ENCODE measurements at regions of chrX and their contacts with region 1.

Region 1: GRCh38 chrX:14872851-14873675 is at the starts of genes FANCB and MOSPD2:
- DNase-seq: peak; percentile 93
- H3K4me3 Mint-ChIP-seq: peak within 1 kb of the TSS; percentile 83
- H3K27ac Mint-ChIP-seq: peak within 1 kb of the TSS; percentile 80
- H3K4me1 Mint-ChIP-seq: peaks cover 27% of the 10 kb centered on the region
- H3K27me3 Mint-ChIP-seq: no peaks in the 10 kb centered on the region
- total RNA-seq, gene FANCB: 14.2 and 14.6 TPM in 2 replicates
- total RNA-seq, gene MOSPD2: 12.6 and 14.8 TPM in 2 replicates

Region 2: DNA sequence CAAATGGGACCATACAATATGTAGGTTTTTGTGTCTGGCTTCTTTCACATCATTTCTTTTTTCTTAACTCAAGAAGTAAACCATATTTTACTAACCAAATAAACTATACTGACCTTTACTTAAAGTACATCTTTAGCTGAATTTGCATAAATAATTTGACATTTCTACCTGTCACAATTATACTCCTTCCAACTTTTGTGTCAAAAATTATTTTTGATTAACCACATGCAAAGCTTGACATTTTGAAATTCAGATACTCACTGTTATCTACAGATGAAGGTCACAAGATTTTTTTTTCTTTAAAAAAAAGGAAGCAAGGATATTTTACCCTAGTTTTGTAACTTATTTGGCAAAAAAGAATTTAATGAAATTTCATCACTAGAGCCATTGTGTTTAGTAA is 1196.2 kb before region 1 on chrX:
- intact Hi-C with region 1: no loop called
- DNase-seq: no peak
- H3K4me3 Mint-ChIP-seq: no peak overlapping the region
- H3K27ac Mint-ChIP-seq: no peak overlapping the region
- H3K4me1 Mint-ChIP-seq: no peaks in the 10 kb centered on the region
- H3K27me3 Mint-ChIP-seq: no peaks in the 10 kb centered on the region

Region 3: DNA sequence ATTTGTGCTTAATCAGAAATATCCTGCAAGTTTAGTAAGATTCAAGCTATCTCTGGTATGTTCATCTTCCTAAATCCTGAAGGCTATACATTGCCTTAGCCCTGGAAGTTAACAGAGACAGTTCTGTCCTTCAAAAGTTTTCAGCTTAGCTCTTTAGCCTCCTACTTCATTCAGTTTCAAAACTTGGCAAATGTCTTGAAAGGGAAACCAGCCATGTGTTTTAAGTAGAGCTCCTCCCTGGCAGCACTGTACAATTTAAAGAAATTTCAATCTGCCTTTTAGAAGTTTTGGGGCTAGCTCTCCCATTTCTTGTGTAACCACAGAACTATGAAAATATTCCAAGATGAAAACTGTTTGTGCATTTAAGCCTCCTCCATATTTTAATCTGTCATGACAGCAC is 47.2 kb before region 1 on chrX:
- intact Hi-C with region 1: no loop called
- DNase-seq: no peak
- H3K4me3 Mint-ChIP-seq: no peak overlapping the region
- H3K27ac Mint-ChIP-seq: no peak overlapping the region
- H3K4me1 Mint-ChIP-seq: no peaks in the 10 kb centered on the region
- H3K27me3 Mint-ChIP-seq: no peaks in the 10 kb centered on the region

Region 4: GRCh38 chrX:14851526-14851925 is 21.5 kb before region 1 on chrX:
- intact Hi-C with region 1: no loop called
- DNase-seq: no peak
- H3K4me3 Mint-ChIP-seq: no peak overlapping the region
- H3K27ac Mint-ChIP-seq: no peak overlapping the region
- H3K4me1 Mint-ChIP-seq: peaks cover 3% of the 10 kb centered on the region
- H3K27me3 Mint-ChIP-seq: no peaks in the 10 kb centered on the region

Region 5: GRCh38 chrX:14916017-14916674 is 43.1 kb after region 1 on chrX:
- intact Hi-C with region 1: loop called (anchors 2 kb)
- DNase-seq: no peak
- H3K4me3 Mint-ChIP-seq: no peak overlapping the region
- H3K27ac Mint-ChIP-seq: no peak overlapping the region
- H3K4me1 Mint-ChIP-seq: no peaks in the 10 kb centered on the region
- H3K27me3 Mint-ChIP-seq: no peaks in the 10 kb centered on the region

Region 6: GRCh38 chrX:14964500-14964899 is 91.4 kb after region 1 on chrX:
- intact Hi-C with region 1: no loop called
- DNase-seq: no peak
- H3K4me3 Mint-ChIP-seq: no peak overlapping the region
- H3K27ac Mint-ChIP-seq: no peak overlapping the region
- H3K4me1 Mint-ChIP-seq: no peaks in the 10 kb centered on the region
- H3K27me3 Mint-ChIP-seq: no peaks in the 10 kb centered on the region

Region 7: DNA sequence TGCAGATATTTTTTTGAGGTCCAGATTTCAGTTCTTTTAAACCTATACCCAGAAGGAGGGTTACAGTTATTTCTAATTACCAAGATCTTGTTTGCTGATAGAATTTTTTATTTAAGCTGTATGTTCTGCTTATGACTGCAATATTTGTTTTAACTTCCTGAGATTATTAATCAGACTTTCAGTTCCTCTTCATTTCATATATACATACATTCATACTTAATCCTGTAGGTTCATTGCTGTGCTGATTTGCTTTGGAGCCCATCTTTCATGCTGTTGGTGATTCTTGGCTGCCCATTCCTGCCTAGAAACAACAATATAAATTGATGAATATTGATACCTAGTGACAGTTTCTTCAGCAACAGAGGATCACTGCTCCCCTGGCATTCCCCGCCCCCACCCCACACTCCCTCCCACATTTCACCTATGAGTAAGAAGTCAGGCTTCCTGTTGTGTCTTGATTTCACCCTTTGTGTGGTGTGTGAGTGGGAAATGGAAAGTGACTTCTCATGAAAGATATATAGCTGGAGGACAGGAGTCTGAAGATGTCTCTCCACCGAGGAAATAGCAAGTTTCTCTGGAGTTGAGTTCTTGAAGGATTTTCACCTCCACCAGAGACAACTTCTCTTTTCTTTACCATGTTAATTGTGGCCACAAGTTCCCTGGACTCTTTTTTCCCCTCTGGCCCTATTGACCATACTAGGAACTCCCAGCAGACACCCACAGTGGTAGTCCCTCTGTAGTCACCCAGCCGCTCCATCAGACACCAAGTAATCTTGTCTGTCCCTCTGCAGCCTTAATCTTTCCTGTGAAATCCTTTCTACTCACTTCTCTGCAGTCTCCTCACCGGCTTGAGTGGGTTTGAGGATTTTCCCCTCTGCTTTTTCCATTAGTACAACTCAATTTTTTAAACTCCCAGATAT is 278.5 kb after region 1 on chrX:
- intact Hi-C with region 1: loop called (anchors 1 kb)
- DNase-seq: no peak
- H3K4me3 Mint-ChIP-seq: no peak overlapping the region
- H3K27ac Mint-ChIP-seq: peak overlapping the region; percentile 38
- H3K4me1 Mint-ChIP-seq: peaks cover 21% of the 10 kb centered on the region
- H3K27me3 Mint-ChIP-seq: peaks cover 7% of the 10 kb centered on the region